ENCODE measurements at regions of chr18 and their contacts with region 1.

Region 1: DNA sequence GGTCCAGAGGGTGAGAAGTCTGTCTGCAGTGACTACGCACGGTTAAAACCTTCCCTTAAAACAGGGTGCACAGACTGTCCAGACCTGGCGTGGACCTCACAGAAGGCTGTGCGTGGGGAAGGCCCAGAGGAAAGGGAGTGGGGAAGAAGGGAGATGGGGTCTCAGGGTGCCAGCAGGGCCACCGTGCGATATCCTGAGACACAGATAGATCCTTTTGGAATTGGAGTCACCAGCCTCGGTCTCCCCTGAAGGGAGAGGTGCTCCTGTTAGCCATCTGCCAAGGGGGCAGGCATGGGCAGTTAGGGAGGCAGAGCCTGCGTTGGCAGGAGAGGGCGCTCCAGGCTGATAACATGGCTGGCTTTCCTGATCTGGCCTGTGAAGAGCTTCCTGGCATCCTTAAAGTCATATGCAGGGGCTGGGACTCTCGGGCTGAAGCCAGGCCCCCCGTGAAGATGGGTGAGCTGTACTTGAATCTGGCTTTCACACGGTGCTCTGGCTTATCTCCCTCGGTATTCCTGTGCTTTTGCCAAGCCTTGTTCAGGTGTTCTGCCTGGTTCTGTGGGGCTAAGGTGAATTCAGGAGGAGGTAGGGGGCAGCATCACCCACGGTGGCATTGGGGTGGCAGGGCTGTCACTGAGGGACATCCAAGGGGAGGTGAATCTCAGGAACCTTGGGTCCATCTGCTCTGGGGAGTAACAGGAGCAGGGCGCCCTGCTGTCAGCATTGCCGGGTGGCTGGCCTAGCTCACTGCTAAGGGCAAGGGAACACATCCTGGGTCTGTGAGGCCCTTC is 107.2 kb upstream of the SMAD2 start:
- DNase-seq: no peak
- ATAC-seq: peak; percentile 51

Region 2: DNA sequence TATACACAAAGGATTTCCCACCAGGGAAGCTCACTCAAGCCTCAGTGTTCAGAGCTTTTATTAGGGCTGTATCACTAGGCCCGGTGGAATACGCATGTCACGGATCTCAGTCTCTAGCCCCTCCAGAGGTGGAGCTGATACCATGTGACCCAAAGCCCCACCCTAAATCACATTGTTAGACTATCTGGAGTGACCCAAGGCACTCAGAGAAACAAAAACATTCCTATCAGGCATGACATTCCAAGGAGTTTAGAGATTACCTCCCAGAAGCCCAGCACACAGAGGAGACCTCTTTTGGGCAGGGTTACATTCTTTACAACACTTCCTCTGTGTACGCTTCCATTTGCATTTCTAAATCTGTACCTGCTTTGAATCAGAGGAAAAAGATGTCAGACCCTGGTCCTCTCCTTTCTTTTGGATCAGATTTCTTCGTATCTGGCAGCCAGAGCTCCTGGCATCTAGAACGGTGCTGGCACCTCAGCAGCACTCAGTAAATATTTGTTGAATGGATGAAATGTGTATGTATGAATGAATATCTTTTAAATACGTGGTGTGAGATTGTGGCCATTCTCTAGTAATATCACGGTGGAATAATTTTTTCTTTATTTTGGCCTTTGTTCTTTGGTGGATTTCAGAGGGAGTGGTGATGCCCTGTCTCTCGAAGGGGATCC is 69.5 kb before region 1 on chr18:
- intact Hi-C with region 1: no loop called
- DNase-seq: no peak
- ATAC-seq: no peak

Region 3: GRCh38 chr18:48252525-48252924 is 214.8 kb after region 1 on chr18:
- intact Hi-C with region 1: no loop called
- DNase-seq: no peak
- ATAC-seq: no peak

Region 4: GRCh38 chr18:48345596-48345995 is 307.9 kb after region 1 on chr18:
- intact Hi-C with region 1: loop called (anchors 2 kb)
- DNase-seq: no peak
- ATAC-seq: no peak

Measured in Right ventricle myocardium inferior (tissue), 1 donor.